Activated CD4-positive, alpha-beta T cell treated with anti-CD3 and anti-CD28 coated beads for 36 hours (primary cell): ENCODE measurements at regions of chr11 and their contacts with region 1.

Region 1: GRCh38 chr11:69122642-69123431 is 32.9 kb upstream of the SMIM38 start:
- DNase-seq: peak; percentile 91
- ATAC-seq: peak; percentile 91
- H3K4me3 Mint-ChIP-seq: peak overlapping the region; percentile 12
- H3K27ac Mint-ChIP-seq: peak overlapping the region; percentile 19
- H3K4me1 Mint-ChIP-seq: peaks cover 41% of the 10 kb centered on the region
- H3K27me3 Mint-ChIP-seq: no peaks in the 10 kb centered on the region

Region 2: GRCh38 chr11:69166218-69167115 is 43.6 kb after region 1 on chr11:
- CTCF ChIA-PET with region 1: interaction called, 3 read pairs
- POLR2A ChIA-PET with region 1: no interaction called
- intact Hi-C with region 1: loop called in 1 of 2 experiments (anchors 1 kb)
- DNase-seq: peak; percentile 77
- ATAC-seq: peak; percentile 99
- H3K4me3 Mint-ChIP-seq: no peak overlapping the region
- H3K27ac Mint-ChIP-seq: peak overlapping the region; percentile 77
- H3K4me1 Mint-ChIP-seq: peaks cover 18% of the 10 kb centered on the region
- H3K27me3 Mint-ChIP-seq: no peaks in the 10 kb centered on the region

Region 3: GRCh38 chr11:69337211-69337721 is 214.4 kb after region 1 on chr11:
- CTCF ChIA-PET with region 1: no interaction called
- POLR2A ChIA-PET with region 1: no interaction called
- intact Hi-C with region 1: loop called in 1 of 2 experiments (anchors 1 kb)
- DNase-seq: peak; percentile 63
- ATAC-seq: peak; percentile 87
- H3K4me3 Mint-ChIP-seq: peak overlapping the region; percentile 15
- H3K27ac Mint-ChIP-seq: peak overlapping the region; percentile 70
- H3K4me1 Mint-ChIP-seq: peaks cover 36% of the 10 kb centered on the region
- H3K27me3 Mint-ChIP-seq: no peaks in the 10 kb centered on the region